ENCODE measurements at regions of chr14 and their contacts with region 1.

Region 1: GRCh38 chr14:64294672-64295413 is 672 bp upstream of the ESR2 start:
- DNase-seq: peak; percentile 42
- H3K4me3 ChIP-seq: peak overlapping the region; percentile 4 to 33 (median 28)
- H3K27ac ChIP-seq: no peak overlapping the region
- H3K4me1 ChIP-seq: peaks cover 27% of the 10 kb centered on the region
- H3K27me3 ChIP-seq: no peaks in the 10 kb centered on the region
- CTCF ChIP-seq: peak; percentile 42 to 88

Region 2: GRCh38 chr14:63800651-63801375 is 494.0 kb before region 1 on chr14:
- CTCF ChIA-PET with region 1: no interaction called
- dilution Hi-C with region 1: no loop called
- in situ Hi-C with region 1: loop called (anchors 10 kb)
- intact Hi-C with region 1: loop called (anchors 2 kb)
- DNase-seq: no peak
- H3K4me3 ChIP-seq: no peak overlapping the region
- H3K27ac ChIP-seq: no peak overlapping the region
- H3K4me1 ChIP-seq: no peaks in the 10 kb centered on the region
- H3K27me3 ChIP-seq: no peaks in the 10 kb centered on the region
- CTCF ChIP-seq: no peak

Region 3: GRCh38 chr14:64005822-64006221 is 289.0 kb before region 1 on chr14:
- CTCF ChIA-PET with region 1: no interaction called
- dilution Hi-C with region 1: no loop called
- in situ Hi-C with region 1: loop called in 1 of 2 experiments (anchors 25 kb)
- intact Hi-C with region 1: loop called (anchors 1 kb)
- DNase-seq: no peak
- H3K4me3 ChIP-seq: no peak overlapping the region
- H3K27ac ChIP-seq: no peak overlapping the region
- H3K4me1 ChIP-seq: no peaks in the 10 kb centered on the region
- H3K27me3 ChIP-seq: no peaks in the 10 kb centered on the region
- CTCF ChIP-seq: no peak

Region 4: GRCh38 chr14:64040044-64040443 is 254.8 kb before region 1 on chr14:
- CTCF ChIA-PET with region 1: no interaction called
- dilution Hi-C with region 1: no loop called
- in situ Hi-C with region 1: no loop called
- intact Hi-C with region 1: loop called (anchors 1 kb)
- DNase-seq: no peak
- H3K4me3 ChIP-seq: no peak overlapping the region
- H3K27ac ChIP-seq: no peak overlapping the region
- H3K4me1 ChIP-seq: no peaks in the 10 kb centered on the region
- H3K27me3 ChIP-seq: no peaks in the 10 kb centered on the region
- CTCF ChIP-seq: peak; percentile 35 to 41

Region 5: GRCh38 chr14:64117671-64118402 is 177.0 kb before region 1 on chr14:
- CTCF ChIA-PET with region 1: no interaction called
- dilution Hi-C with region 1: no loop called
- in situ Hi-C with region 1: no loop called
- intact Hi-C with region 1: loop called (anchors 1 kb)
- DNase-seq: peak; percentile 92
- H3K4me3 ChIP-seq: peak overlapping the region in 2 of 3 experiments; percentile 25 to 36
- H3K27ac ChIP-seq: peak overlapping the region; percentile 98
- H3K4me1 ChIP-seq: peaks cover 25% of the 10 kb centered on the region
- H3K27me3 ChIP-seq: no peaks in the 10 kb centered on the region
- CTCF ChIP-seq: peak; percentile 10 to 38

Region 6: GRCh38 chr14:64244279-64244678 is 50.6 kb before region 1 on chr14:
- CTCF ChIA-PET with region 1: no interaction called
- dilution Hi-C with region 1: no loop called
- in situ Hi-C with region 1: no loop called
- intact Hi-C with region 1: loop called (anchors 5 kb)
- DNase-seq: no peak
- H3K4me3 ChIP-seq: no peak overlapping the region
- H3K27ac ChIP-seq: no peak overlapping the region
- H3K4me1 ChIP-seq: no peaks in the 10 kb centered on the region
- H3K27me3 ChIP-seq: no peaks in the 10 kb centered on the region
- CTCF ChIP-seq: no peak

Region 7: GRCh38 chr14:64478634-64479250 is 183.9 kb after region 1 on chr14:
- CTCF ChIA-PET with region 1: no interaction called
- dilution Hi-C with region 1: no loop called
- in situ Hi-C with region 1: no loop called
- intact Hi-C with region 1: no loop called
- DNase-seq: peak; percentile 3
- H3K4me3 ChIP-seq: no peak overlapping the region
- H3K27ac ChIP-seq: no peak overlapping the region
- H3K4me1 ChIP-seq: no peaks in the 10 kb centered on the region
- H3K27me3 ChIP-seq: no peaks in the 10 kb centered on the region
- CTCF ChIP-seq: peak; percentile 25 to 34